Calu3 (cell line): ENCODE measurements at regions of chr18 and their contacts with region 1.

Region 1: DNA sequence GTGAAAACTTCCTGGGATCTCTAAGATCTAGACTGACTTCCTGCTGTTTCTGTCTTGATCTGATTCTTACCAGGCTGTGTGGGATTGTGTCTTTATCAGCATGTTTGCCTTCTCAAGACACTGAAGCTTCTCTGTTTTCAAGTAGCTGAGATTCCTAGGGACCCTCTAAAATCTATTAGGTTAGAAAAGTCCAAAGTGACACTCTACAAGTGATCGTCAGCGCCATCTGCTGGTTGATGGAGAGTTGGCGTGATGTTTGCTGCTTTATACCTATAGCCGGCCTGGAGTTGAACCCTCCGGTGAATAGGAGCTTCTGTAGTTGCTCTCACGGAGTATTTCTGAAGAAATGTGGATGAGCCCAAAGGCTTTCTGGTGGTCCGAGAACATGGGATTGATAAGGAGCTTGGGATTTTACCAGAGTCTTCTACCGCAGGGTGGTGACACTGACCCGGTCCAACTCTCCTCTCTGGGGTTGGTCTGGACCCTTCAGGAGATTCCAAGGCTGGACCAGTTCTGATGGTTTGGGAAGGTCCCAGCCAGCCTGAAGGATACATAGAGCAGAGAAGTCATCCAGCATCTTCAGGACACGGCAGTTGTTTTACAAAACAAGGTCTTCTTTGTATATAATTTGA is 96.0 kb upstream of the TTC39C start:
- DNase-seq: peak; percentile 71
- H3K4me3 Mint-ChIP-seq: no peak overlapping the region
- H3K27ac Mint-ChIP-seq: no peak overlapping the region
- H3K4me1 Mint-ChIP-seq: peaks cover 16% of the 10 kb centered on the region
- H3K27me3 Mint-ChIP-seq: no peaks in the 10 kb centered on the region
- CTCF ChIP-seq: peak; percentile 87

Region 2: GRCh38 chr18:23619388-23619881 is 299.1 kb before region 1 on chr18:
- CTCF ChIA-PET with region 1: no interaction called
- intact Hi-C with region 1: loop called (anchors 5 kb)
- DNase-seq: no peak
- H3K4me3 Mint-ChIP-seq: peak overlapping the region; percentile 61
- H3K27ac Mint-ChIP-seq: peak overlapping the region; percentile 2
- H3K4me1 Mint-ChIP-seq: peaks cover 49% of the 10 kb centered on the region
- H3K27me3 Mint-ChIP-seq: no peaks in the 10 kb centered on the region
- CTCF ChIP-seq: no peak